Gastrocnemius medialis (tissue), 4 donors: ENCODE measurements at regions of chr7 and their contacts with region 1.

Region 1: DNA sequence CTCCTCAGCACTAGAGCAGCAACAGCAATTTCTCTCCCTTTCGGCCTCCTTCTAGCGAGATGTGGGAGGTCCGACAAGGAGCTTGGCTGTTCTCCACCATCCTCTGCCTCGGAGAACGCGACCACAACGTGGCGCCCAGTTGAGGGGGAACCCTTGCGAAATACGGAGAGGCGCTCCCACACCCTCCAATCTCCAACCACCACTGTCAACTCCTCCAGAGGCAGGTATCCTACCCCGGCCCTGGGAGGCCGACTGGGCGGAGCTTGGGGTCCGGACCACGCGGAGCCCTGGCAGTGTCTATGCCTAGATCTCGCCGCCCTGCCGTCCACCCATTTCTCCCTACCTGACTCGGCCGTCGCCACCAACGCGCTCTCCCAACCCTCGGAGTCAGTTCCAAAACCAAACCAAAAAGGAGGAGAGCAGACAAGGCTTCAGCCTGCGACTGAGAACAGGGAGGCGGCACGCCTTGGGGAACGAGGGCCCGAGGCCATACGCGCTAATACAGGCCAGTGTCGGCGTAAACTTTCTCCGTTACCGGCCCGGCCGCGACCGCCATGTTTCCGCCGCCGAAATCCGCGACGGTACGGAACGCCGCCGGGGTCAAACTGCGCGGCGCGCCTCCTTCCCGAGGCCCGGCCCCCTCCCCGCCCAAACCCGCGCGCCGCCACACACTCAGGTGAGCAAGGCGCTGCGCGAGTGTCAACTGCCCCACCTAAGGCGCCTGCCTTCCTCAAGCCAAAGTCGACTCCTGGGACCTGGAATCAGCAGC is at the start of gene TMEM168:
- DNase-seq: peak; percentile 43 to 64
- ATAC-seq: peak; percentile 81 to 88
- H3K4me3 ChIP-seq: peak within 1 kb of the TSS; percentile 82 to 98 (median 94)
- H3K27ac ChIP-seq: peak within 1 kb of the TSS; percentile 83 to 90 (median 88)
- H3K4me1 ChIP-seq: peaks cover 8 to 20% of the 10 kb centered on the region in 2 donors
- H3K27me3 ChIP-seq: no peaks in the 10 kb centered on the region
- CTCF ChIP-seq: no peak
- POLR2A ChIP-seq: peak; percentile 28 to 32
- total RNA-seq, gene TMEM168: 6.0 to 10.9 (median 6.2) TPM

Region 2: GRCh38 chr7:112939574-112940314 is 149.7 kb after region 1 on chr7:
- in situ Hi-C with region 1: no loop called
- intact Hi-C with region 1: loop called (anchors 5 kb)
- DNase-seq: peak; percentile 99
- ATAC-seq: peak; percentile 98 to 99
- H3K4me3 ChIP-seq: peak overlapping the region; percentile 85 to 90 (median 88)
- H3K27ac ChIP-seq: peak overlapping the region; percentile 81 to 88 (median 85)
- H3K4me1 ChIP-seq: peaks cover 15 to 21% of the 10 kb centered on the region in 2 donors
- H3K27me3 ChIP-seq: no peaks in the 10 kb centered on the region
- CTCF ChIP-seq: no peak
- POLR2A ChIP-seq: peak; percentile 36 to 72